ENCODE measurements at regions of chr12 and their contacts with region 1.

Region 1: GRCh38 chr12:113980537-113981337 is 14.6 kb upstream of the RBM19 start:
- DNase-seq: peak; percentile 36 to 66
- H3K4me3 ChIP-seq: no peak overlapping the region
- H3K27ac ChIP-seq: no peak overlapping the region
- H3K4me1 ChIP-seq: no peaks in the 10 kb centered on the region
- H3K27me3 ChIP-seq: peaks cover 0 to 5% (median under 1%) of the 10 kb centered on the region in 4 experiments; a peak in 1 of 7 replicates
- CTCF ChIP-seq: peak; percentile 48 to 90 (median 88)
- EP300 ChIP-seq: no peak
- POLR2A ChIP-seq: no peak
- RAD21 ChIP-seq: peak; percentile 99

Region 2: GRCh38 chr12:113912760-113913329 is 67.9 kb before region 1 on chr12:
- CTCF ChIA-PET with region 1: no interaction called
- POLR2A ChIA-PET with region 1: no interaction called
- DNase-seq: peak; percentile 77 to 94
- H3K4me3 ChIP-seq: no peak overlapping the region
- H3K27ac ChIP-seq: no peak overlapping the region
- H3K4me1 ChIP-seq: peaks cover 0 to 2% (median 0%) of the 10 kb centered on the region in 4 experiments; a peak in 1 of 7 replicates
- H3K27me3 ChIP-seq: no peaks in the 10 kb centered on the region
- CTCF ChIP-seq: peak; percentile 86 to 95 (median 94)
- EP300 ChIP-seq: no peak
- POLR2A ChIP-seq: no peak
- RAD21 ChIP-seq: peak; percentile 97 to 99

Region 3: DNA sequence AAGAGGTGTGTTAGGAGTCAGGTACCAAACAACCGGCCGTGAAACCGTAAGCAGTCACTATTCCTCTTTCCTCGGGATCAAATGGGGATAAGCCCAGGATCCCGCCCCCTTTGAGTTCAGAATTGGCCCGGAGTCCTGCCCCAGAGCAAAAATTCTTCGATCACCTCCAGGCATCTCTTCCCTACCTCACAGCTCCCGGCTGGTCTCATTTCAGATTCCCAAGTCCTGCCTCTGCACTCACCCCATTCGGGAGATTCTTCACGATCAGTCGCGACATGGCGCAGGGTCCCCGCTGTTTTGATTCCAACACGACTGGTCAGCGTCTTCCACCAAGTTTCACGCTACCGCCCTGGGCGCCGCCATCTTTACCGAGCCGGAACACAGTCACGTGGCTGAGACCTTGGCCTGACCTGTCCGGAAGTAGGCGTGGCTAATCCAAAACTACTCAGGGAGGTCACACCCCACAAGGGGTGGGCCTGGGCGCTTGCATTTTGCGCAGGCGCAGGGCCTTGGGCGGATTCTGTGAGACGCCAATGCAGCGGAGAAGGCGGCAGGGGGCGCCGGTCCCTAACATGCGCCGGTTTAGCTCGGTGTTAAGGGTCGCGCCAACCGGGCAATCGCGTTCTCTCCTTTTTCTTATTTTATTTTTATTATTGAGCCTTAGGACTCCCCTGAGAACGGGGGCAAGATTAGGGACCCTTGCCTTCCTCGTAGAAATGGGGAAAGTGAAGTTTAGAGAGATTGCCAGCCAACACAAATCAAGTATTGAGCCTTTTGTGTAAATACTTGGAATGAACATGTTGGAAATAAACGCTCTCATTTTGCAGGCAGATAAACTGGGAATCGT is 14.6 kb before region 1 on chr12 and contains the start of gene RBM19:
- CTCF ChIA-PET with region 1: interaction called, 11 read pairs
- POLR2A ChIA-PET with region 1: interaction called, 6 read pairs
- DNase-seq: peak; percentile 93 to 98
- H3K4me3 ChIP-seq: peak within 1 kb of the TSS; percentile 73 to 93 (median 88)
- H3K27ac ChIP-seq: peak within 1 kb of the TSS; percentile 72; the same call in 1 of the 2 replicates
- H3K4me1 ChIP-seq: peaks cover 0 to 7% (median 2%) of the 10 kb centered on the region in 4 experiments; a peak in 3 of 7 replicates
- H3K27me3 ChIP-seq: no peaks in the 10 kb centered on the region
- CTCF ChIP-seq: peak; percentile 67 to 85 (median 82)
- EP300 ChIP-seq: no peak
- POLR2A ChIP-seq: peak; percentile 75 to 77
- RAD21 ChIP-seq: peak; percentile 61 to 68
- total RNA-seq, gene RBM19: 59.5 and 61.9 TPM in 2 replicates

Region 4: GRCh38 chr12:113996026-113996425 is 15.3 kb after region 1 on chr12:
- CTCF ChIA-PET with region 1: interaction called, 32 read pairs
- POLR2A ChIA-PET with region 1: interaction called, 3 read pairs
- DNase-seq: peak; percentile 23 to 55
- H3K4me3 ChIP-seq: no peak overlapping the region
- H3K27ac ChIP-seq: no peak overlapping the region
- H3K4me1 ChIP-seq: no peaks in the 10 kb centered on the region
- H3K27me3 ChIP-seq: no peaks in the 10 kb centered on the region
- CTCF ChIP-seq: peak; percentile 52 to 77 (median 64)
- EP300 ChIP-seq: no peak
- POLR2A ChIP-seq: no peak
- RAD21 ChIP-seq: peak; percentile 57 to 68

Measured in H1 (cell line).